Spleen (tissue), 13 donors: ENCODE measurements at regions of chr7 and their contacts with region 1.

Region 1: DNA sequence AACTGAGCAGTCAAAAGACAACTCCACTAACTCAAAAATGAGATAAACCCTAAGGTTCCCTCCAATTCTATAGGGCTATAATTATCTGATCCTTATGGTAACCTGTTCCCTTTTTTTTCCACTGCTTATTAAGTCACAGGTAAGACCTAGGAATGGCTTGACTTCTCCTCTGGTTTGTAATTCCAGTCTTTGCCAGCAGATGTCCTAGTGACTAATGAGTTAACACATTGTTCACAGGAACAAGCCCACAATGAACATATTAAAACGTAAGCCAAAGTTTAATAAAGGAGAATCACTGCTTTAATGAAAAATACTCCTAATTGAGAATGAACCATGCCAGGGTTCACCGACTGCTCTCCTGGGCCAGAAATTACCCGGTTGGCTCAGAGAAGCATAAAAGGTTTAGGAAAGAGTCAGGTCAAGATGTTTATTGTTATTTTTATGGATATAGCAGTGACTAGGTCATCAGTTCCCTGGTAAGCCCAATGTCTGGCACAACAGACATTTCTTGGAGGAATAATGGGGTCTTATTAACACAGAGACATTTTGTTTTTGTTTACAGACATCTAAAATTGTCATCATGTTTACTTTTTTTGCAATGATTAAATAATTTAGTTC is 120.1 kb downstream of the ELAPOR2 start:
- DNase-seq: no peak
- H3K4me3 ChIP-seq: no peak overlapping the region
- H3K27ac ChIP-seq: no peak overlapping the region
- H3K4me1 ChIP-seq: no peaks in the 10 kb centered on the region
- H3K27me3 ChIP-seq: no peaks in the 10 kb centered on the region
- CTCF ChIP-seq: peak; percentile 52 to 83 (median 70)
- POLR2A ChIP-seq: no peak

Region 2: DNA sequence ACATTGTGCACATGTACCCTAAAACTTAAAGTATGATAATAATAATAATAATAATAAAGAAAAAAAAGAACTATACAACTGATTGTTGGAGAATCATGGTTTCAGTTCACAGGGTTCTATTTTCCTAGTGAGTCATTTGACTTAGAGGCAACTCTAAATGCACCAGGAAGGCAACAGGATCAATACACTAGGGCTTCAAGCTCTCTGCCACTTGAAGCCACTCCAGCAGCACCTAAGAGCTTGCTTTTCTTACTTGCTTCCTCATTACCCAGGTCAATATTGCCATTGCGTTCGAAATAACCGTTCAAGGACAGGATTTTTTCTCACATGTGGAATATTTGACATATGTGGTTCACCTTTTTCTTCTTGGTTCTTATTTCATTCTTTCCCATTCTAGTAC is 105.9 kb before region 1 on chr7:
- intact Hi-C with region 1: no loop called
- DNase-seq: no peak
- H3K4me3 ChIP-seq: no peak overlapping the region
- H3K27ac ChIP-seq: no peak overlapping the region
- H3K4me1 ChIP-seq: no peaks in the 10 kb centered on the region
- H3K27me3 ChIP-seq: no peaks in the 10 kb centered on the region
- CTCF ChIP-seq: no peak
- POLR2A ChIP-seq: no peak

Region 3: DNA sequence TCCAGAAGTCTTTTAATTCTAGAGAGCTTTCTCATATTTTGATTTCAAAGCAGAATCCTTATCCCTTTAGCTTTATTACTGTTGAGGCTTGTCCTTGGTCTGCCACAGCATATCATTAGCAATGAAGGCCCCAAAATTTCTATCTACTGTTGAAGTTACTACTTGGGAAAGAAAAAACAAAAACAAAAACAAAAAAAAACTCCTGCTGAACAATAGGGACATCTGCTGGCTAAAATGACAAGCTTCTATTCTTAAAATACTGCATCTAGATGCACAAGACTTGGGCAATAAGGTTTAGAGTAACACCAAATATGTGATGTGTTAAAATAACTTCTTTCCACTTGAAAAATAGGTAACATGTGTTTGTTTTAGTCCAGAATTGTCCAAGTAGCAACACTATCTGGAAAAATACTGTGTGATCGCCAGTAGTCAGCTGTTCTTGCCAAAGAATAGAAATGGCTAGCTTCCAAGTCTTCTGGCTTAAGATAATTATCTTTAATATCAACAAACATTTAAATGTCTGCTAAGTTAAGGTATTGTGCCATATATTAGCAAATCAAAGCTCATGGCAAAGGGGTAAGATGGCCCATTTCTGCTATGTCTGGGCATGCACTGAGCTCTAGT is 209.1 kb after region 1 on chr7:
- intact Hi-C with region 1: loop called (anchors 5 kb)
- DNase-seq: no peak
- H3K4me3 ChIP-seq: no peak overlapping the region
- H3K27ac ChIP-seq: no peak overlapping the region
- H3K4me1 ChIP-seq: peaks cover 0 to 33% (median 12%) of the 10 kb centered on the region in 6 donors
- H3K27me3 ChIP-seq: no peaks in the 10 kb centered on the region
- CTCF ChIP-seq: peak in 8 of 11 experiments; percentile 45 to 64 (median 54)
- POLR2A ChIP-seq: no peak